WTC11 (cell line): ENCODE measurements at regions of chr1 and their contacts with region 1.

Region 1: DNA sequence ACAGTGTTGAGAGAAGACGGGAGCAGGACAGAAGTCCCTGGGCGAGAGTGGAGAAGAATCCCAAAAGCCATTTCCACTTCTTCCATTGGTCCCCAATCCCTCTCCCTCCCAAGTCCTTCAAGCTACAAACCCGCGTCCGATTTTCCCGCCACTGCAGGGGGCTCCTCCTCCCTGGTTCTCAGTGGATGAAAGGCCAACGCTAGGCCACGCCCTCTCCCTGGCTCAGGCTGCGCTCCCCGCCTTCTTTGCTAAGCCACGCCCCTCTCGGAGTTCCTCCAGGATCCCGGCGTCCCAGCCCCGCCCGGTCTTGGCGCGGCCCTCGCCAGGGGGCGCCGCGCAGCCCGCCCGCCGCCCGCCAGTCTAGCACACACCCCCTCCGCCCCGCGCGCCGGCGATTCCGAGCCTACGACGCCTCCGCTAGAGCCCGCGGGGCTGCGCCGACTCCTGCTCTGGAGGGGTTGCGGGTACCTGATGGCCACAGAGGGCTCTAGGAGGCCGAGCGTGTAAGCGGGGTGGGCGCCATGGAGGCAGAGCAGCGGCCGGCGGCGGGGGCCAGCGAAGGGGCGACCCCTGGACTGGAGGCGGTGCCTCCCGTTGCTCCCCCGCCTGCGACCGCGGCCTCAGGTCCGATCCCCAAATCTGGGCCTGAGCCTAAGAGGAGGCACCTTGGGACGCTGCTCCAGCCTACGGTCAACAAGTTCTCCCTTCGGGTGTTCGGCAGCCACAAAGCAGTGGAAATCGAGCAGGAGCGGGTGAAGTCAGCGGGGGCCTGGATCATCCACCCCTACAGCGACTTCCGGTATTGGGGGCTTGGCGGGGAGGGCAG is at the start of gene HCN3:
- DNase-seq: peak; percentile 100
- ATAC-seq: peak; percentile 68
- H3K4me3 Mint-ChIP-seq: peak within 1 kb of the TSS; percentile 68
- H3K27ac Mint-ChIP-seq: no peak within 1 kb of the TSS
- H3K4me1 Mint-ChIP-seq: peaks cover 32% of the 10 kb centered on the region
- H3K27me3 Mint-ChIP-seq: peaks cover 18% of the 10 kb centered on the region
- CTCF ChIP-seq: peak; percentile 35; the same call in 1 of the 2 replicates
- total RNA-seq, gene HCN3: 5.9 to 7.3 TPM (median 6.3 TPM) in 3 replicates

Region 2: DNA sequence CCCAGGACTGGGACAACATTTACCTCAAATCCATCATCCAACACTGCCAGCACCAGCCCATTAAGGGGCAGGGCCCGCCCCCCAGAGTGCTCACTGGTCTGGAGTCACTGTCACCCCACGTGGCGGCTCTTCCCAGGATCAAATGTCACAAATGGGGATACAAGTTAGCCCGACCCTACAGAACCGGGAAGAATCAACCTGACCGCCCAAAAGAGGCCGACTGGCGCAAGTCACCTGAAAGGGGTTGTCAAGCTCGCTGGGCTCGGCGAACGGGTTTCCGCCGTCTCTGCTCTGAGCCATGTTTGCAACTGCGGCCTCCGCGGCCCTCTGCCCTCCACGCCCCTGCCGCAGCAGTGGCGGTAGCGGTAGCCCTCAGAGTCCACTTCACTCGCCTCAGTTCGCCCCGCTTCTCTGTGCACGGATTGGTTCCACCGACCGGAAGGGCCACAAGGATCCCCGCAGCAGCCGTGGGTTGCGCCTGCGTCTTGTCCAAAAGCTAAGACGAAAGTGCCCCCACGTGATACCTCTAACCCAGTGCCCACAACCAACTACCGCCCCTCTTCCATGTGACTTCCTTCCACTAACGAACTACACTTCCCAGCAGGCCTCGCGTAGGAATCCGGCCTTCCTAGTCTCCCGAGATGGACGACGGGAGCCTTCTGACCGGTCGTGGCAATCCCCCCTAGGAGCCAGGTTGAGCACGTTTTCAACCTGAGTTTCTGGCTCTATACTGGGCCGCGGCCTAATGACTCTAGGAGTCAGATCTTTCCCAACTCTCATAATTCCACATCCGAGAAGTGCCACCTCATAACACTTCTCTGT is 15.2 kb before region 1 on chr1 and contains the start of gene SCAMP3:
- CTCF ChIA-PET with region 1: interaction called, 11 read pairs
- POLR2A ChIA-PET with region 1: interaction called, 11 read pairs
- DNase-seq: peak; percentile 92
- ATAC-seq: peak; percentile 94
- H3K4me3 Mint-ChIP-seq: peak within 1 kb of the TSS; percentile 96
- H3K27ac Mint-ChIP-seq: peak within 1 kb of the TSS; percentile 97
- H3K4me1 Mint-ChIP-seq: peaks cover 14% of the 10 kb centered on the region
- H3K27me3 Mint-ChIP-seq: no peaks in the 10 kb centered on the region
- CTCF ChIP-seq: no peak
- total RNA-seq, gene SCAMP3: 50.0 to 58.8 TPM (median 52.2 TPM) in 3 replicates

Region 3: DNA sequence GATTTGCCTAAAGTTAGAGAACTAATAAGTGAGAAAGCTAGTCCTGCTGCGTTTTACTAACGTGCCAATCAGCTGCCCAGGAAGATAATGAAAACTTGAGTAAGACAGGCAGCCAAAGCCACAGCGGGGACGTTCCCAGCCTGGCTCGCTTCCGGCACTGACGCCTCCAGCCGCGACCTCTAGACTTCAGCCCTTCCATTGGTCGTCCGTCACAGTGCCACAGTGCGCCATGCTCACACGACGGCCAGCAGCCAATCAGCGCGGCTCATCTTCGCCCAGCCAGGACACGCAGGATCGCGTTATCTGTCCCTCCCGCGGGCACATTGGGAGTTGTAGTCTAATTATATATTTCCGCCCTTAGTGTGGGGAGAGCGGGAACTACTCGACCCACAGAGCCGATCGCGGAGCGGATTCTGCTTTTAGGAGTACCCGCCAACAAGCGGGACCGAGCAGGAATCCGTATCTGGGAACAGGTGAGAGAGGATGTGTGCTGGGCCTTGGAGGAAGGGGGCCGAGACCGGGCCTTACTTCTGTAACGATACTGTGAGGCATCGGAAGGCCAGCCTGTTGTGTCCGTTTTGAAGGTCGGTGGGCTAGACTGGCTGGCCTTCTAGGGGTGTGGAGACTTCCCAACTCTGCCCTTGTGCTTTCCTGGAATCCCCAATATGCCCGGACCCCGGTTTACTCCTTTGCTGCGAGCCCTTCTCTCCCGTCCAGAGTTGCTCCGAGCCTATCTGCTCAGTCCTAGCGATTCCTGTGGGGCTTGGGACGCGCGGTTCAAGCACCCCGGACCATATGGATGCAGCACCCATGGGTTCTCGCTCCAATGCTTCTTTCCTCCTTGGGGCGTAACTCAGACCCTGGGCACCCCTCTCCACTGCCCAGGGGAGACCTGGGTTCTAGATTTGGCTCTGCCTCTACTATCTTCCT is 31.5 kb after region 1 on chr1 and contains the start of gene FDPS:
- CTCF ChIA-PET with region 1: interaction called, 27 read pairs
- POLR2A ChIA-PET with region 1: interaction called, 4 read pairs
- DNase-seq: peak; percentile 97
- ATAC-seq: peak; percentile 97
- H3K4me3 Mint-ChIP-seq: peak within 1 kb of the TSS; percentile 97
- H3K27ac Mint-ChIP-seq: peak within 1 kb of the TSS; percentile 99
- H3K4me1 Mint-ChIP-seq: peaks cover 22% of the 10 kb centered on the region
- H3K27me3 Mint-ChIP-seq: no peaks in the 10 kb centered on the region
- CTCF ChIP-seq: no peak
- total RNA-seq, gene FDPS: 342 to 366 TPM (median 354 TPM) in 3 replicates

Region 4: GRCh38 chr1:155339515-155340097 is 62.3 kb after region 1 on chr1:
- CTCF ChIA-PET with region 1: no interaction called
- POLR2A ChIA-PET with region 1: no interaction called
- DNase-seq: no peak
- ATAC-seq: no peak
- H3K4me3 Mint-ChIP-seq: no peak overlapping the region
- H3K27ac Mint-ChIP-seq: no peak overlapping the region
- H3K4me1 Mint-ChIP-seq: no peaks in the 10 kb centered on the region
- H3K27me3 Mint-ChIP-seq: no peaks in the 10 kb centered on the region
- CTCF ChIP-seq: no peak